GM10248 (cell line): ENCODE measurements at regions of chrX and their contacts with region 1.

Region 1: DNA sequence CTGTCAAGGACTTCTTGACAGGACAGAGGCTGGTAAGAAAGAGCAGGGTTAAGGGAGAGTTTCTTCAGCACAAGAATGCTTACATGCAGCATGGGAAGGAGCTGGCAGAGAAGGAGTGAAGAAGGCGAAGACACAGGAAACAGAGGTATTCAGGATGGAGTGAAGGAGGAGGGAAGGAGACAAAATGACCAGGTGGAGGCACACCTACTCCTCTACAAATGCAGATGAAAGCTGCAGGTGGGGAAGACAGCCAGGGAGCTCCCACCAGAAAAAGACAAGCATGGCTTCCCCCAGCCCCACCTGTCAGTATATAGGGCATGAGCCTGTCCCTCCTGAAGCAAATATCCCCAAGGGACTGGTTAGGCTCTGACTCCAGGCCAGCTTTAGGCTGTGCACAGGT is 29.6 kb upstream of the NKRF start:
- DNase-seq: no peak
- CTCF ChIP-seq: no peak

Region 2: GRCh38 chrX:119647552-119648420 is 12.0 kb after region 1 on chrX:
- CTCF ChIA-PET with region 1: no interaction called
- POLR2A ChIA-PET with region 1: interaction called, 10 read pairs
- DNase-seq: peak; percentile 76
- CTCF ChIP-seq: no peak

Region 3: DNA sequence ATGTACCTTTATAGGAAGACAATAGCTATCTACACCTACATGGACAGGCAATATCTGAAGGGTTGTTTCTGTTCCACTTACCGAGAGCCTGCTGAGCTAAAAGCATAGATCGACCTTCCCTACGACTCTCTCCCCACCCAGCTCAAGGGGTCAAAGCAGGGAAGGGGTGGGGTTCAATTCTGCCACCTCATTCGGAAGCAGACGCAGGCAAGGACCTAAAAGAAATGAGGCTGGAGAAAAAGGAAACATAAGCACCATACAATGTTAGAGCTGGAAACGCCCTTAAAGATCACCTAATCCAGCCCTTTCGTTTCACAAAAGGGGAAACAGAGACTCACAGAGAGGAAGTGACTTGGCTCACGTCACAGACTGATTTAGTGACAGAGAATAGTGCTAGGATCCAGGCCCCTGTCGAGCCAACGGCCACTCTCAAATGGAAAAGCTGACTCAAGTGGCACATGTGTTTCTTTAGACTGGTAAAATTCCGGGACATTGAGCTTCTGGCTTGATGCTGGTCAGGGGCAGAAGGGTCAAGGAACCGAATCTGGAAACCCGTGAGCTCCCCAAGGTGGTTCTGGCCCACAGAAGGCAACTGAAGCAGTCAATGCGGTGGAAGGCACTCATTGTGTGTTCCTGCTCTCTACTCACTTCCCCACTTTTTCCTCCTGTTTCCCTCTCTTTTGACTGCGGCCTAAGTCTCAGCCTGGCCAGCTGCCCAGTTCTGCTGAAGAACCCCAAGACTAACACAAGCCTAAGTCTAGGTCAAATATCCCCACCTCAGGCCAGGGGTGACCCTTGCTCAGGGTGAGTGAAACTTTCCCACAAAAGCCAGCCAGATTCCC is 49.6 kb after region 1 on chrX:
- CTCF ChIA-PET with region 1: no interaction called
- POLR2A ChIA-PET with region 1: no interaction called
- DNase-seq: peak; percentile 39
- CTCF ChIP-seq: no peak